B cell (primary cell): ENCODE measurements at regions of chr1 and their contacts with region 1.

Region 1: GRCh38 chr1:110872745-110873720 is at the start of gene CD53:
- DNase-seq: peak; percentile 92
- ATAC-seq: peak; percentile 66
- H3K4me3 ChIP-seq: peak within 1 kb of the TSS; percentile 73 to 100 (median 97)
- H3K4me3 Mint-ChIP-seq: peak within 1 kb of the TSS; percentile 99
- H3K27ac ChIP-seq: peak within 1 kb of the TSS; percentile 96 to 99
- H3K27ac Mint-ChIP-seq: peak within 1 kb of the TSS; percentile 99
- H3K4me1 ChIP-seq: peaks cover 60% of the 10 kb centered on the region in 2 donors
- H3K4me1 Mint-ChIP-seq: peaks cover 70% of the 10 kb centered on the region
- H3K27me3 ChIP-seq: no peaks in the 10 kb centered on the region
- H3K27me3 Mint-ChIP-seq: no peaks in the 10 kb centered on the region
- CTCF ChIP-seq: no peak
- total RNA-seq, gene CD53: 490 and 495 TPM in 2 replicates

Region 2: DNA sequence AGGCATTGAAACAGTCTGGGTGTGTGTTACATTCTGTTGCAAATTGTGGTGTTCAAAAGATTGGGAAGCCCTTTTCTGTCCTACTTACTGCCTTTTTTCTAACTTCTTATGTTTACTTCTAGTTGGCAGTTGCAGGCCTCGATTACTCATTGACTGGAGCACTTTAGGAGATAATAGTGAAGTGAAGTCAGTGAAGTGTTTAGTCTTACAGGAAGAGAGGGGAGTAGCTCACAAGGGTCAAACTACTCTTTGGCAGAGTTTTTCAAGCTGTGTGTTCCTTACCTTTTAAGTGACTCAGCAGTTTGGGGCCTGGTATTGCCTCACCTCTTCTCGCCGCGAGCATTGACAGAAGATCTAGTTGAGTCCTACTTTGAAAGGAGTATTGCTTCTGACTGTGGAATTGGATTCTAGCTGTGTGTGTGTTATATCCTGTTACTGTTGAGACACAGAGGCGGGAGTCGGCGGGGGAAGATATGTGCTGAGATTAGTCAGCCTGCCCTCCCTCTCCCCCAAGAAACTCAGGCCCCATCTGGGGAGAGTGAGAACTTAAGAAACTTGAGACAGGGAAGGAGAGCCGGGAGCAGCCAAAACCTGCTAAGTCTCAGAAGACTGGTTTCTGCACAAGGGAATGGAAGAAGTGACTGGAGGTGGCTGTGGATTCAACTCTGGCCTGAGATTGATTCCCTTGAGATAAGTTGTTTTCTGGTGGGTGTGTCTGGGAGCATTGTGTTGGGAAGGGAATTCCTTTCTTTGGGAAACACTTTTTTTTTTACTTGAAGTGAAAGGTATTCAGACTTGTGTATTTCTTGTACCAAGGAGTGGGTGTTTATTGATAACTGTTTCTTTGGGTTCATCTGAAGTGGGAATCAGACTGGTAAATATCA is 869.0 kb before region 1 on chr1:
- CTCF ChIA-PET with region 1: no interaction called
- POLR2A ChIA-PET with region 1: no interaction called
- intact Hi-C with region 1: no loop called
- DNase-seq: no peak
- ATAC-seq: peak; percentile 64
- H3K4me3 ChIP-seq: no peak overlapping the region
- H3K4me3 Mint-ChIP-seq: no peak overlapping the region
- H3K27ac ChIP-seq: peak overlapping the region in 1 of 2 donors; percentile 34
- H3K27ac Mint-ChIP-seq: peak overlapping the region; percentile 74
- H3K4me1 ChIP-seq: peaks cover 10 to 11% of the 10 kb centered on the region in 2 donors
- H3K4me1 Mint-ChIP-seq: peaks cover 38% of the 10 kb centered on the region
- H3K27me3 ChIP-seq: no peaks in the 10 kb centered on the region
- H3K27me3 Mint-ChIP-seq: no peaks in the 10 kb centered on the region
- CTCF ChIP-seq: no peak

Region 3: GRCh38 chr1:110857964-110858948 is 14.8 kb before region 1 on chr1:
- CTCF ChIA-PET with region 1: interaction called, 8 read pairs
- POLR2A ChIA-PET with region 1: interaction called, 8 read pairs
- intact Hi-C with region 1: loop called (anchors 2 kb)
- DNase-seq: no peak
- ATAC-seq: peak; percentile 54
- H3K4me3 ChIP-seq: peak overlapping the region in 1 of 5 experiments; percentile 3
- H3K4me3 Mint-ChIP-seq: peak overlapping the region; percentile 57
- H3K27ac ChIP-seq: peak overlapping the region; percentile 8 to 25
- H3K27ac Mint-ChIP-seq: peak overlapping the region; percentile 88
- H3K4me1 ChIP-seq: peaks cover 20 to 36% of the 10 kb centered on the region in 2 donors
- H3K4me1 Mint-ChIP-seq: peaks cover 41% of the 10 kb centered on the region
- H3K27me3 ChIP-seq: no peaks in the 10 kb centered on the region
- H3K27me3 Mint-ChIP-seq: no peaks in the 10 kb centered on the region
- CTCF ChIP-seq: no peak

Region 4: GRCh38 chr1:110963691-110964399 is 90.8 kb after region 1 on chr1 and contains the start of gene LRIF1:
- CTCF ChIA-PET with region 1: interaction called, 8 read pairs
- POLR2A ChIA-PET with region 1: interaction called, 5 read pairs
- intact Hi-C with region 1: loop called (anchors 1 kb)
- DNase-seq: peak; percentile 100
- ATAC-seq: peak; percentile 96
- H3K4me3 ChIP-seq: peak within 1 kb of the TSS; percentile 62 to 98 (median 82)
- H3K4me3 Mint-ChIP-seq: peak within 1 kb of the TSS; percentile 83
- H3K27ac ChIP-seq: peak within 1 kb of the TSS; percentile 95 to 98
- H3K27ac Mint-ChIP-seq: peak within 1 kb of the TSS; percentile 88
- H3K4me1 ChIP-seq: peaks cover 20 to 21% of the 10 kb centered on the region in 2 donors
- H3K4me1 Mint-ChIP-seq: peaks cover 30% of the 10 kb centered on the region
- H3K27me3 ChIP-seq: peaks cover 0 to 13% (median 7%) of the 10 kb centered on the region in 4 experiments
- H3K27me3 Mint-ChIP-seq: peaks cover 10% of the 10 kb centered on the region
- CTCF ChIP-seq: peak; percentile 60
- total RNA-seq, gene LRIF1: 22.6 and 26.5 TPM in 2 replicates

Region 5: DNA sequence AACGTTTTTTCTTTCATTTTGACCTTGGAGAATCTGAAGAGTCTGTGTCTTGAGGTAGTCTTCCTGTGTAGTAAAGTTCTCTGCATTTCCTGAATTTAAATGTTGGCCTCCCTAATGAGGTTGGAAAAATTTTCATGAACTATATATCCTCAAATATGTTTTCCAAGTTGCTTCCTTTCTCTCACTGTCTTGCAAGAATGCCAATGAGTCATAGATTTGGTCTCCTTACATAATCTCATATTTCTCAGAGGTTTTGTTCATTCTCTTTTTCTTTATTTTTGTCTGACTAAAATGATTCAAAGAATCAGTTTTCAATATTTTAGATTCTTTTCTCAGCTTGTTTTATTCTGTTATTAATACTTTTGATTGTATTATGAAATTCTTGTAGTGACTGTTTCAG is 179.2 kb after region 1 on chr1:
- CTCF ChIA-PET with region 1: no interaction called
- POLR2A ChIA-PET with region 1: no interaction called
- intact Hi-C with region 1: no loop called
- DNase-seq: no peak
- ATAC-seq: no peak
- H3K4me3 ChIP-seq: no peak overlapping the region
- H3K4me3 Mint-ChIP-seq: no peak overlapping the region
- H3K27ac ChIP-seq: no peak overlapping the region
- H3K27ac Mint-ChIP-seq: no peak overlapping the region
- H3K4me1 ChIP-seq: no peaks in the 10 kb centered on the region
- H3K4me1 Mint-ChIP-seq: no peaks in the 10 kb centered on the region
- H3K27me3 ChIP-seq: no peaks in the 10 kb centered on the region
- H3K27me3 Mint-ChIP-seq: no peaks in the 10 kb centered on the region
- CTCF ChIP-seq: no peak